HepG2 (cell line): ENCODE measurements at regions of chr10 and their contacts with region 1.

Region 1: DNA sequence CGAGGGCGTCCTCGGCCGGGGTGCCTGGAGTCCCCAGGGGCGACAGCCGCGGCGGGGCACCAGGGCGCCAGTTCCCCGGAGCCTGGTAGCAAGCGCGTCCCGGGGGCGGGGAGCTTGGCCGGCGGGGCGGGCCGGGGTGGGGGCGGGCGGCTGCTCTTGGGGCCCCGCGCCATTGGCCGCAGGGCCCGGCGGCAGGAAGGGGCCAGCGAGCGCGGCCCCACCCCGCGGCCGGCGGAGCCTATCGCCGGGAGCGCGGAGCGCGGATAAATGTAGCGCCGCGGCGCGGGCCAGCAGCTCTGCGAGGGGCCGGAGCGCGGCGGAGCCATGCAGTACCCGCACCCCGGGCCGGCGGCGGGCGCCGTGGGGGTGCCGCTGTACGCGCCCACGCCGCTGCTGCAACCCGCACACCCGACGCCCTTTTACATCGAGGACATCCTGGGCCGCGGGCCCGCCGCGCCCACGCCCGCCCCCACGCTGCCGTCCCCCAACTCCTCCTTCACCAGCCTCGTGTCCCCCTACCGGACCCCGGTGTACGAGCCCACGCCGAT is at the start of gene HHEX:
- DNase-seq: peak; percentile 56
- ATAC-seq: peak; percentile 89
- H3K4me3 ChIP-seq: peak within 1 kb of the TSS; percentile 80 to 98 (median 94)
- H3K27ac ChIP-seq: peak within 1 kb of the TSS; percentile 86
- H3K4me1 ChIP-seq: peaks cover 29% of the 10 kb centered on the region
- H3K27me3 ChIP-seq: no peaks in the 10 kb centered on the region; a peak in 1 of 5 replicates
- CTCF ChIP-seq: no peak; the same call in 1 of the 2 replicates
- EP300 ChIP-seq: no peak
- POLR2A ChIP-seq: peak; percentile 96 to 98
- RAD21 ChIP-seq: peak; percentile 19; the same call in 1 of the 2 replicates
- total RNA-seq, gene HHEX: 46.3 and 48.7 TPM in 2 replicates

Region 2: GRCh38 chr10:92517034-92517655 is 172.6 kb before region 1 on chr10:
- CTCF ChIA-PET with region 1: no interaction called
- POLR2A ChIA-PET with region 1: no interaction called
- in situ Hi-C with region 1: no loop called
- intact Hi-C with region 1: loop called (anchors 2 kb)
- DNase-seq: peak; percentile 66
- ATAC-seq: peak; percentile 95
- H3K4me3 ChIP-seq: no peak overlapping the region
- H3K27ac ChIP-seq: no peak overlapping the region
- H3K4me1 ChIP-seq: no peaks in the 10 kb centered on the region
- H3K27me3 ChIP-seq: no peaks in the 10 kb centered on the region; a peak in 1 of 5 replicates
- CTCF ChIP-seq: peak; percentile 77
- EP300 ChIP-seq: no peak
- POLR2A ChIP-seq: no peak
- RAD21 ChIP-seq: no peak

Region 3: DNA sequence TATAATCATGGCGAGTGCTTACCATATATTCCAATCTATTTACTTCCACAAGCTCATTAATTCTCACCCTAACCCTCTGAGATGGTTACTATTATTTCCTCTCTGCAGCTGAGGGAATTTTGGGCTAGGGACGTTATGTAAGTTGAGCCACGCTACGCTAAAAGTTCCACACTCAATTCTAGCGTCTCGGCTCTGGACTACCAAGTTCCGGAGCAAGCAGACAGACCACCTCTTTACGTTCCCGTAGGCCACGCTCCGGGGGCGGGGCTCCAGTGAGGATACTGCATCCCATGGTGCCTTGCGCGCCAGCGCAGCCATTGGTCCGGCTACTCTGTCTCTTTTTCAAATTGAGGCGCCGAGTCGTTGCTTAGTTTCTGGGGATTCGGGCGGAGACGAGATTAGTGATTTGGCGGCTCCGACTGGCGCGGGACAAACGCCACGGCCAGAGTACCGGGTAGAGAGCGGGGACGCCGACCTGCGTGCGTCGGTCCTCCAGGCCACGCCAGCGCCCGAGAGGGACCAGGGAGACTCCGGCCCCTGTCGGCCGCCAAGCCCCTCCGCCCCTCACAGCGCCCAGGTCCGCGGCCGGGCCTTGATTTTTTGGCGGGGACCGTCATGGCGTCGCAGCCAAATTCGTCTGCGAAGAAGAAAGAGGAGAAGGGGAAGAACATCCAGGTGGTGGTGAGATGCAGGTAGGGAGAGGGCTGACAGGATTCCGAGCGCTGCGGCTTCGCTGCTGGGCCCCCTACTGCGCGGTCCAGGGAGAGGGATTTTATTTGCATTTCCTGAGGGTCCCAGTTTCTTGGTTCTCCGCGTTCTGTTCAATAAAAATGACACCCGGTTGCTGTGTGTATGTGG is 96.7 kb before region 1 on chr10 and contains the start of gene KIF11:
- CTCF ChIA-PET with region 1: no interaction called
- POLR2A ChIA-PET with region 1: interaction called, 10 read pairs
- in situ Hi-C with region 1: no loop called
- intact Hi-C with region 1: loop called (anchors 5 kb)
- DNase-seq: peak; percentile 95
- ATAC-seq: peak; percentile 88
- H3K4me3 ChIP-seq: peak within 1 kb of the TSS; percentile 81 to 91 (median 88)
- H3K27ac ChIP-seq: peak within 1 kb of the TSS; percentile 88
- H3K4me1 ChIP-seq: peaks cover 37% of the 10 kb centered on the region
- H3K27me3 ChIP-seq: no peaks in the 10 kb centered on the region; a peak in 1 of 5 replicates
- CTCF ChIP-seq: peak; percentile 25; the same call in 1 of the 2 replicates
- EP300 ChIP-seq: 0 out of 4 replicates have a peak, but pooled peaks have one; percentile 18 to 35
- POLR2A ChIP-seq: peak; percentile 96 to 97
- RAD21 ChIP-seq: no peak
- total RNA-seq, gene KIF11: 38.4 and 62.8 TPM in 2 replicates

Region 4: DNA sequence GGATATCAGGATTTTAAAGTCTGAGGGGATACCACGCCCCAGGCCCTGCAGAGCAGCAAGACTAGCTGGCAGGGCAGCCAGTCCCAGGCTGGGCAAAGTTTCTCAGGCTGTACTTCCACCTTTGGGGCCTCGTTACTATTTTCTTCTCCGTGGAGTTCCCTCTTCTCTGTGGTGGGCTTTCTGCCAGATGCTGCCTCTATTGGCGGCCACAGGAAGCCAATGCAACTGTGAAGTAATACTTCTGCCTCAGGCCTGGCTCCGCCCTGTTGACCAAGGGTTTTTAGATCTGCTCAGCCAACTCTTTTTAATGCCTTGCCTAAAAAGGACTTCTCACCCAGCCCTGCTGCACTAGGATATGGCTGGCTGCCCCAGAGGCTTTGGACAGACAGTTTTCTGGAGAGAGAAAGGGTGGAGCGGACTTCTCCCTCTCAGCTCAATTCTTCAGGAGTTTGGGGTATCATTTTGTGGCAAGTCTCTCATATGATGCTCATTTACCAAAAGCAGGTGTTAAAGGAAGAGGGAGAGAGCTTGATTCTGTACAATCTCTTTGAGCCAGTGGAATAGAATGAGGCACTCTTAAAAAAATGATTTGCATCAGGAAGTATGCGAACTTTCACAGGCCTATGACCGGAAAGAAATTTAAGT is 67.5 kb after region 1 on chr10:
- CTCF ChIA-PET with region 1: no interaction called
- POLR2A ChIA-PET with region 1: interaction called, 13 read pairs
- in situ Hi-C with region 1: no loop called
- intact Hi-C with region 1: loop called (anchors 2 kb)
- DNase-seq: peak; percentile 72
- ATAC-seq: peak; percentile 87
- H3K4me3 ChIP-seq: peak overlapping the region; percentile 17 to 60 (median 37); a peak in 5 of 6 replicates
- H3K27ac ChIP-seq: peak overlapping the region; percentile 41
- H3K4me1 ChIP-seq: peaks cover 64% of the 10 kb centered on the region
- H3K27me3 ChIP-seq: 0 out of 5 replicates have a peak, but pooled peaks cover 0 to 2% of the 10 kb centered on the region in 2 experiments
- CTCF ChIP-seq: peak; percentile 51
- EP300 ChIP-seq: no peak
- POLR2A ChIP-seq: no peak
- RAD21 ChIP-seq: 0 out of 2 replicates have a peak, but pooled peaks have one; percentile 29

Region 5: DNA sequence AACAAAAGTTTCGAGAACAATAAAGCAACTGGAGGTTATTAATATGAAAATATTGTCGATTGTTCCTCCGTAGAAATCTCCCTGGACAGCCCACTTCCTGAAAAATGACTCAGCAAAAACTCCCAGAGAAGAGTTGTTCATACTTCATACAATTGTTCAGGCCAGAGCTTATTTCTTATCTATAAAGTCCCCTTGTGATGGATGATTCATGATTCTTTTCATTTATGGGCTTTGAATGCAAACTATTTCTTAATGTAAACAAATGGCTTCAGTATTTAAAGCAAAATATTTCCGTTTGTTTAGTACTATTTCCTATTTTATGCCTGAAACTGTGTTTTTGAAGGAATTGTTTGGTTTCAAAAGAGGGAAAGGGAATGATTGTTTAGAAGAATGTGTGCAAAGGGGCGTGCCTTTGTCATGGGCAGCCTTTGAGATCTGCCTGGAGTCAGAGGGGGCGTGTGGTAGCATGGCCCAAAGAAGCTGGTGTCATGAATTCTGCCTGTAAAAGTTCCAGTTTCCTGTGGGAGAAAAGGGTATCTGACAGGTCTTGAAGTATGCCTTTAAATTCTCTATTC is 132.4 kb after region 1 on chr10:
- CTCF ChIA-PET with region 1: no interaction called
- POLR2A ChIA-PET with region 1: no interaction called
- in situ Hi-C with region 1: no loop called
- intact Hi-C with region 1: loop called (anchors 2 kb)
- DNase-seq: peak; percentile 34
- ATAC-seq: no peak; the same call in 2 of the 3 replicates
- H3K4me3 ChIP-seq: no peak overlapping the region
- H3K27ac ChIP-seq: peak overlapping the region; percentile 22
- H3K4me1 ChIP-seq: peaks cover 26% of the 10 kb centered on the region
- H3K27me3 ChIP-seq: no peaks in the 10 kb centered on the region; a peak in 2 of 5 replicates
- CTCF ChIP-seq: no peak
- EP300 ChIP-seq: no peak; a peak in 1 of 4 replicates
- POLR2A ChIP-seq: no peak
- RAD21 ChIP-seq: no peak

Region 6: DNA sequence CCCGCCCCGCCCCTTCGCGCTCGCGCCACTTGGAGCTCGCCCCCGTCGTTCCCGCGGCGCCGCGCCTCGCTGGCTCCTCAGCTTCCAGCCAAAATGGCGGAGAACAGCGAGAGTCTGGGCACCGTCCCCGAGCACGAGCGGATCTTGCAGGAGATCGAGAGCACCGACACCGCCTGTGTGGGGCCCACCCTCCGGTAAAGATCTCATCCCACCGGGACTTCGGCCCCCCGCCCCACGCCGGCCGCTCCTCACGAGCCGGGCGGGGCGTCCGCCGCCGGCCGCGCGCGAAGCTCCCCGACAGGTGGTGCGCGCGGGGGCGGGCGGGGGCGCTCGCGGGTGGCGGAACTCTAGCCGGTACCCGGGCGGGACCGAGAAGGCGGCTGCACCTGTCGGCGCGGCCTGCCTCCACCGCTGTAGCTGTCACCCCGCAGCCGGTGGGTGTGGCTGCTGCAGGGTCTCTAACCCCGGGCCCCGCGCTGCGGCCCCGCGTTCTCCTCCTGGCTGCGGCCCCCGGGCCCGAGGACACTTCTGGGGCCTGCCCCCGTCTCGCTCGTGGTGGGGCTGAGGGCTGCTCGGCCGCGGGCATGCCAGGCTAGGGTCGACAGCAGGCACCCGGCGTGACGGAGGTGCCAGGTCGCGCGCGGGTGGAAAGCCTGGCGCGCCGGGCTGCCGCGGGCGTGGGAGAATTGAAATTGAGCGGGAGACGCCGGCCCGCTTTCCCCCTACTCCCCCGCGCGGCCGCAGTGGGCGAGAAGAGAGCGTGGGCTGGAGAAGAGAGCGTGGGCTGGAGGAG is 158.9 kb after region 1 on chr10 and contains the start of gene EXOC6:
- CTCF ChIA-PET with region 1: no interaction called
- POLR2A ChIA-PET with region 1: interaction called, 27 read pairs
- in situ Hi-C with region 1: no loop called
- intact Hi-C with region 1: loop called (anchors 1 kb)
- DNase-seq: peak; percentile 63
- ATAC-seq: peak; percentile 87
- H3K4me3 ChIP-seq: peak within 1 kb of the TSS; percentile 94 to 96 (median 95)
- H3K27ac ChIP-seq: peak within 1 kb of the TSS; percentile 81
- H3K4me1 ChIP-seq: peaks cover 37% of the 10 kb centered on the region
- H3K27me3 ChIP-seq: no peaks in the 10 kb centered on the region; a peak in 1 of 5 replicates
- CTCF ChIP-seq: peak; percentile 36; the same call in 1 of the 2 replicates
- EP300 ChIP-seq: no peak
- POLR2A ChIP-seq: peak; percentile 78 to 82
- RAD21 ChIP-seq: peak; percentile 48; the same call in 1 of the 2 replicates
- total RNA-seq, gene EXOC6: 22.2 and 48.7 TPM in 2 replicates